ENCODE measurements at regions of chr1 and their contacts with region 1.

Region 1: GRCh38 chr1:185156854-185157598 is at the starts of genes SWT1 and TRMT1L:
- DNase-seq: peak; percentile 94
- CTCF ChIP-seq: no peak

Region 2: GRCh38 chr1:184982002-184982954 is 174.7 kb before region 1 on chr1:
- in situ Hi-C with region 1: loop called (anchors 25 kb)
- DNase-seq: peak; percentile 74
- CTCF ChIP-seq: peak; percentile 84

Region 3: GRCh38 chr1:185663332-185663731 is 506.3 kb after region 1 on chr1:
- in situ Hi-C with region 1: no loop called
- DNase-seq: no peak
- CTCF ChIP-seq: no peak

Measured in GM13976 (cell line).